ENCODE measurements at regions of chrX and their contacts with region 1.

Region 1: DNA sequence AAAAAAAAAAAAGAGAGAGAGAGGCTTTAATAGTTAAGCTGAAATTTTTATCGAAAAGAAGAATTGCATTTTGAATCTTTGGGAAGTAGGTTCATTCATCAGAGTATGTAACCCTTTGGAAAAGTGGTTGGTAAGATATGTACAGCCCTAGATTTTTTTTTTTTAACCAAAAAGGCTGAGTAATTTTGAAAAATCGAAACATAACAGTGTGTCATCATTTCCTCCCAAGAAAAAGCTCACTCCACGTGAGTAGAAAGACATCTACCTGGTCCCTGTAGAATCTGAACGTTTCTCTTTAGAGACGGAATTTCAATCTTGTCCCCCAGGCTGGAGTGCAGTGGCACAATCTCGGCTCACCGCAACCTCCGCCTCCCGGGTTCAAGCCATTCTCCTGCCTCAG is 16.2 kb downstream of the SHOX start:
- DNase-seq: no peak
- ATAC-seq: no peak

Region 2: GRCh38 chrX:623599-624315 is 23.0 kb before region 1 on chrX:
- intact Hi-C with region 1: no loop called
- DNase-seq: no peak
- ATAC-seq: no peak

Region 3: DNA sequence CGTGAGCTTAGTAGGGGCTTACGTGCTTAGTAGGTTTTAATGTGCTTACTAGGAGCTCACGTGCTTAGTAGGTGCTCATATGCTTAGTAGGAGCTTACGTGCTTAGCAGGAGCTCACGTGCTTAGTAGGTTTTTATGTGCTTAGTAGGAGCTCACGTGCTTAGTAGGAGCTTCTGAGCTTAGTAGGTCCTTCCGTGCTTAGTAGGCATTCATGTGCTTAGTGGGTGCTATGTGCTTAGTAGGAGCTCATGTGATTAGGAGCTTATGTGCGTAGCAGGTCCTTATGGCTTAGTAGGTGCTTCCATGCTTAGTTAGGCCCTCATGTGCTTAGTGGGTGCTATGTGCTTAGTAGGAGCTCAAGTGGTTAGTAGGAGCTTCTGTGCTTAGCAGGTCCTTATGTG is 43.2 kb after region 1 on chrX:
- intact Hi-C with region 1: loop called (anchors 2 kb)
- DNase-seq: no peak
- ATAC-seq: no peak

Region 4: GRCh38 chrX:867966-868647 is 221.3 kb after region 1 on chrX:
- intact Hi-C with region 1: no loop called
- DNase-seq: peak; percentile 18
- ATAC-seq: no peak

Measured in sciatic nerve (tissue), 2 donors.